ENCODE measurements at regions of chr21 and their contacts with region 1.

Region 1: GRCh38 chr21:33479679-33480480 is at the start of gene TMEM50B:
- DNase-seq: peak; percentile 96
- ATAC-seq: peak; percentile 85
- H3K4me3 ChIP-seq: peak within 1 kb of the TSS; percentile 70 to 91 (median 78)
- H3K4me3 Mint-ChIP-seq: peak within 1 kb of the TSS; percentile 94
- H3K27ac ChIP-seq: peak within 1 kb of the TSS; percentile 56 to 95
- H3K27ac Mint-ChIP-seq: peak within 1 kb of the TSS; percentile 95
- H3K4me1 ChIP-seq: peaks cover 12 to 14% of the 10 kb centered on the region in 2 donors
- H3K4me1 Mint-ChIP-seq: peaks cover 17% of the 10 kb centered on the region
- H3K27me3 ChIP-seq: no peaks in the 10 kb centered on the region
- H3K27me3 Mint-ChIP-seq: no peaks in the 10 kb centered on the region
- CTCF ChIP-seq: peak; percentile 40
- total RNA-seq, gene TMEM50B: 79.0 and 79.5 TPM in 2 replicates

Region 2: DNA sequence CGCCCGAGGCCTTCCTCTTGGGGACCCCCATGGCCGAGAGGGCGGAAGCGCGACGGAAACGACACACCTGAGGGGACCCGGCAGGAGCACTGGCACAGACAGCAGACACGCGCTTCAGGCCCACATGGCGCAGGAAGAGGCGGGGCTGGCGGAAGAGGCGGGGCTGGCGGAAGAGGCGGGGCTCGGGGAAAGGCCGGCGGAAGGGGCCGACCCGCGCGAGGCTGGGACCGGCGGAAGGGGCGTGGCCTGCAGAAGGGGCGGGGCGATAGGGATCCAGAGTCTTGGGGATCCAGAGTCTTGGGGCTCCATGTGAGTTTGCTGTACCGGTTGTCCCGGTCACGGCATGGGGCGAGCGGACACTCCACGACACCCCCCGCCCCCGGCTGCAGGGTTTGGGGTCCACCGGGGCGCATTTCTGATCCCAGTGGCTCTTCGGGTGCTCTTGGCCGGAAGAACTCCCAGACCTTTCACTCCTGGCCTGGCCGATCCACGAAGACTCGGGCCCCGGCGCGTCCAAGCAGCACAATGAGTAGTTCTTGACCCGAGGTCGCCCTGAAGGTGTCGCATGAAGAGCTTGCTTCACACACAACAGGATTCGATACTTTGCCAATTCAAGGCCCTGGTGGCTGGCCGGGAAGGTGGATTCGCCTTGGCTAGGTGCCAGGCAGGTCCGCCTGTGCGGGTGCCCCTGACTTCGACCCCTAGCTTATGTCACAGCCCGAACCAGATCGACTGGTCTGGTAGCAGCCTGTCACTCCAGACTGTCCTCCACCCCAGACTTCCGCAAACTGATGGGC is 1086.8 kb before region 1 on chr21 and contains the start of gene URB1:
- CTCF ChIA-PET with region 1: no interaction called
- POLR2A ChIA-PET with region 1: no interaction called
- intact Hi-C with region 1: loop called (anchors 10 kb)
- DNase-seq: peak; percentile 93
- ATAC-seq: peak; percentile 96
- H3K4me3 ChIP-seq: peak within 1 kb of the TSS; percentile 67 to 99 (median 95)
- H3K4me3 Mint-ChIP-seq: peak within 1 kb of the TSS; percentile 92
- H3K27ac ChIP-seq: peak within 1 kb of the TSS; percentile 74 to 90
- H3K27ac Mint-ChIP-seq: peak within 1 kb of the TSS; percentile 90
- H3K4me1 ChIP-seq: peaks cover 18 to 24% of the 10 kb centered on the region in 2 donors
- H3K4me1 Mint-ChIP-seq: peaks cover 39% of the 10 kb centered on the region
- H3K27me3 ChIP-seq: peaks cover 0 to 11% (median 6%) of the 10 kb centered on the region in 4 experiments
- H3K27me3 Mint-ChIP-seq: peaks cover 11% of the 10 kb centered on the region
- CTCF ChIP-seq: no peak
- total RNA-seq, gene URB1: 14.9 and 15.2 TPM in 2 replicates

Region 3: DNA sequence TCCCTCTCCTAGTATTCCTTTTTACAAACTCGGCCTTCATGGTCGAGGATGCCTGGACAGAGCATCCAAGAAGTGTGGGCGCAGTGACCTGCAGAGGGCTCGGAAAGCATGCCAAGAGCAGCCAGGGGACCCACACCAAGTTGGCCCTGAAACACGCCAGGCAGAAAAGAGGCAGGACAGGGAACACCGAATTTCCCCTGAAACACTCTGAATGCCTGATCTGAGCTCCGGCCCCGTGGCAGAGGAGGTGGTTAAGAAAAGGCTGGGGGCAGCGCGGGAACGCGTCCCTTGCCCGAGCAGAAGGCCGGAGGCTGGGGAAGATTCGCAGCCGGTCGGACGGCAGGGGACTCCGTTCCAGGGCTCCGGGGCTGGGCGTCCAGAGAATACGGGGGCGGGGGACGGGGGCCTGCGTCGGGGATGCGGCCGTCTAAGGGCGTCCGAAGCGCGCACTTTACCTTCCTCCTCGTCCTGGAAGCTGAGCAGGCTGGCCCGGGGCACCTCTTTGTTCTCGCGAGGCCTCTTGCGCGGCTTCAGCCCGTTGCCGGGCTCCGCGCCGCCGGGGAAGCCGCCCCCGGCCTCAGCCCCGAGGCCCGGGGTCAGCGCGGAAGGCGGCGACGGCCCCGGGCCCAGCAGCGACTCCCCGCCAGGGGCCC is 708.9 kb before region 1 on chr21:
- CTCF ChIA-PET with region 1: interaction called, 3 read pairs
- POLR2A ChIA-PET with region 1: interaction called, 8 read pairs
- intact Hi-C with region 1: loop called (anchors 2 kb)
- DNase-seq: no peak
- ATAC-seq: peak; percentile 40
- H3K4me3 ChIP-seq: peak overlapping the region; percentile 65 to 84 (median 78)
- H3K4me3 Mint-ChIP-seq: peak overlapping the region; percentile 96
- H3K27ac ChIP-seq: peak overlapping the region; percentile 48 to 77
- H3K27ac Mint-ChIP-seq: peak overlapping the region; percentile 93
- H3K4me1 ChIP-seq: peaks cover 12 to 19% of the 10 kb centered on the region in 2 donors
- H3K4me1 Mint-ChIP-seq: peaks cover 50% of the 10 kb centered on the region
- H3K27me3 ChIP-seq: no peaks in the 10 kb centered on the region
- H3K27me3 Mint-ChIP-seq: no peaks in the 10 kb centered on the region
- CTCF ChIP-seq: no peak

Region 4: DNA sequence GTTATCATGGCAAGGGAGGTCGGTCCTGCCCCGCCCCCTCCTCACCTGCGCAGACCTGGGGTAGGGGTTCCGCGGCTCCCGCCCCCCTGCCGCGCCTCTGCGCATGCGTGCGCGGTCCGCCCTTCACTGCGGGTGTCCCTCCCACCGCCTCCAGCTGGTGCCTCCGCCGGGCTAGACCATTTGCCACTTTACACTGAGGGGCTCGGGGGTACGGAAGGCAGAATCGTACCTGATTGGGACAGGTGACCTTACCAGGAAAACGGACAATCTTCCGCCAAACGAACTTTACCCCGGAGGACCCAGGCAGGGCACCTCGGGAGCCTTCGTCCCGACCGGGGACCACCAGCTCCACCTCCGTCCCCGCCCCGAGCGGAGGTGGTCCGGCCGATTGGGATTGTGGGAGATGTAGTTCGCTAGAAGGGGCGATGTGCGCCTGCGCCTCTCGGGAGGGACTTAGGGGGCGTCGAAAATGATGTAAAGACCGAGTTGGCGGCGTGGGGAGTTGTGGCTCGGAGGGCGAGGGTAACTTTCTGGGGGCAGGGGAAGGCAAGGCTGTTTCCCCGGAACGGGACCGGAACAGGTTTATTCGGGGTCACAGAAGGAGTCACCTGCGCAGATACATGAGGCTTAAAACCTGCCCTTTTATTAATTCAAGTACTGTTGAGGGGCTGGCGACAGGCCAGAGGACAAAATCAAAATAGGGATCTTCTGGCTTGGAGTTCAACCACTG is 11.7 kb after region 1 on chr21 and contains the start of gene DNAJC28:
- CTCF ChIA-PET with region 1: interaction called, 18 read pairs
- POLR2A ChIA-PET with region 1: interaction called, 44 read pairs
- intact Hi-C with region 1: loop called (anchors 1 kb)
- DNase-seq: peak; percentile 98
- ATAC-seq: peak; percentile 97
- H3K4me3 ChIP-seq: peak within 1 kb of the TSS; percentile 65 to 87 (median 80)
- H3K4me3 Mint-ChIP-seq: peak within 1 kb of the TSS; percentile 87
- H3K27ac ChIP-seq: peak within 1 kb of the TSS; percentile 29 to 62
- H3K27ac Mint-ChIP-seq: peak within 1 kb of the TSS; percentile 87
- H3K4me1 ChIP-seq: peaks cover 0 to 9% of the 10 kb centered on the region in 2 donors
- H3K4me1 Mint-ChIP-seq: peaks cover 10% of the 10 kb centered on the region
- H3K27me3 ChIP-seq: no peaks in the 10 kb centered on the region
- H3K27me3 Mint-ChIP-seq: no peaks in the 10 kb centered on the region
- CTCF ChIP-seq: no peak
- total RNA-seq, gene DNAJC28: 2.4 and 2.5 TPM in 2 replicates

Region 5: DNA sequence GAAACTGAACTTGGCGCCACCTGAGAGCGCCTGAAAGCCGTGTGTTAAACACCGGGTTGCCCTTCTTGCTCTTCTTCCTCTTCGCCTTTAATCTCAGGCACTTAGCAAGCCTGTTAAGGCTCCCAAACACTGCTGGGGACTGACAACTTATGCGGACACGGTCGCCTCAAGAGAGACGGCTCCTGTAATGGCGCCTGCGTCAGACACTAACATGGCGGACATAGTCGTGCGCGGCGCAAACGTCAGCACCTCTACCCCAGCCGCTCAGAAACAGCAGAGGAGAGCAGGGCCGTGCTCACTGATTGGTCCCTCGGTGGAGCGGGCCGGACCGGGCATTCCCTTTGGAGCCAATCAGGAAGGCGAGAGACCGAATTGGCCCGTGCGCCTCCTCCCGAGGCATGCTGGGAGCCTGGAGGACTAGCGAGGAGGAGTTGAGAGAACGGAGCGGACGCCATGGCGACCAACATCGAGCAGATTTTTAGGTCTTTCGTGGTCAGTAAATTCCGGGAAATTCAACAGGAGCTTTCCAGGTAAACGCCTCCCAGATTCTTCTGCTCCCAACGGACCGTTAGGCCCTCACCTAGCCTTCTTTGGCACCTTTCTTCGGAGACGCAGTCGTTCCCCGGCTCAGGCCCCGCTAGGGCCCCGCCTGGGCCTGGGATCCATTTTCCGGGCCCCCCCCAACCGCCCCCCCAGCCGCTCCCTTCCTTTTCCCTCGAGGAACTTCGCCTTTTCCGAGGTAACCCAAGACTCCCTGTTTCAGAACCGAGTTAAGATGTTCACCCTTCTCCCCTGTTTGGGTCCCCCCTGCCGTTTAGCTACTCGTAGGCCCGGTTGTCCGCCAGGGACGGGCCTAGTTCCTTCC is 63.0 kb after region 1 on chr21 and contains the start of gene SON:
- CTCF ChIA-PET with region 1: interaction called, 4 read pairs
- POLR2A ChIA-PET with region 1: interaction called, 41 read pairs
- intact Hi-C with region 1: loop called (anchors 1 kb)
- DNase-seq: peak; percentile 98
- ATAC-seq: peak; percentile 88
- H3K4me3 ChIP-seq: peak within 1 kb of the TSS; percentile 69 to 99 (median 89)
- H3K4me3 Mint-ChIP-seq: peak within 1 kb of the TSS; percentile 97
- H3K27ac ChIP-seq: peak within 1 kb of the TSS; percentile 96 to 99
- H3K27ac Mint-ChIP-seq: peak within 1 kb of the TSS; percentile 99
- H3K4me1 ChIP-seq: peaks cover 17 to 31% of the 10 kb centered on the region in 2 donors
- H3K4me1 Mint-ChIP-seq: peaks cover 43% of the 10 kb centered on the region
- H3K27me3 ChIP-seq: no peaks in the 10 kb centered on the region
- H3K27me3 Mint-ChIP-seq: no peaks in the 10 kb centered on the region
- CTCF ChIP-seq: no peak
- total RNA-seq, gene SON: 441 and 463 TPM in 2 replicates

Region 6: GRCh38 chr21:33608559-33608958 is 128.7 kb after region 1 on chr21:
- CTCF ChIA-PET with region 1: interaction called, 10 read pairs
- POLR2A ChIA-PET with region 1: no interaction called
- intact Hi-C with region 1: no loop called
- DNase-seq: no peak
- ATAC-seq: no peak
- H3K4me3 ChIP-seq: no peak overlapping the region
- H3K4me3 Mint-ChIP-seq: no peak overlapping the region
- H3K27ac ChIP-seq: no peak overlapping the region
- H3K27ac Mint-ChIP-seq: no peak overlapping the region
- H3K4me1 ChIP-seq: no peaks in the 10 kb centered on the region
- H3K4me1 Mint-ChIP-seq: no peaks in the 10 kb centered on the region
- H3K27me3 ChIP-seq: no peaks in the 10 kb centered on the region
- H3K27me3 Mint-ChIP-seq: no peaks in the 10 kb centered on the region
- CTCF ChIP-seq: no peak

Region 7: GRCh38 chr21:33641336-33642026 is 161.6 kb after region 1 on chr21 and contains the start of gene CRYZL1:
- CTCF ChIA-PET with region 1: no interaction called
- POLR2A ChIA-PET with region 1: interaction called, 3 read pairs
- intact Hi-C with region 1: loop called (anchors 1 kb)
- DNase-seq: peak; percentile 100
- ATAC-seq: peak; percentile 77
- H3K4me3 ChIP-seq: peak within 1 kb of the TSS; percentile 71 to 91 (median 79)
- H3K4me3 Mint-ChIP-seq: peak within 1 kb of the TSS; percentile 94
- H3K27ac ChIP-seq: peak within 1 kb of the TSS; percentile 84 to 90
- H3K27ac Mint-ChIP-seq: peak within 1 kb of the TSS; percentile 97
- H3K4me1 ChIP-seq: peaks cover 16 to 20% of the 10 kb centered on the region in 2 donors
- H3K4me1 Mint-ChIP-seq: peaks cover 27% of the 10 kb centered on the region
- H3K27me3 ChIP-seq: peaks cover 0 to 27% (median 19%) of the 10 kb centered on the region in 4 experiments
- H3K27me3 Mint-ChIP-seq: peaks cover 22% of the 10 kb centered on the region
- CTCF ChIP-seq: no peak
- total RNA-seq, gene CRYZL1: 60.6 and 66.9 TPM in 2 replicates

Measured in B cell (primary cell).